Activated CD8-positive, alpha-beta memory T cell treated with anti-CD3 and anti-CD28 coated beads, Interleukin-2, amount 10 ng/mL, durations not matched to agents 7 days and 5 days (primary cell): ENCODE measurements at regions of chr17 and their contacts with region 1.

Region 1: DNA sequence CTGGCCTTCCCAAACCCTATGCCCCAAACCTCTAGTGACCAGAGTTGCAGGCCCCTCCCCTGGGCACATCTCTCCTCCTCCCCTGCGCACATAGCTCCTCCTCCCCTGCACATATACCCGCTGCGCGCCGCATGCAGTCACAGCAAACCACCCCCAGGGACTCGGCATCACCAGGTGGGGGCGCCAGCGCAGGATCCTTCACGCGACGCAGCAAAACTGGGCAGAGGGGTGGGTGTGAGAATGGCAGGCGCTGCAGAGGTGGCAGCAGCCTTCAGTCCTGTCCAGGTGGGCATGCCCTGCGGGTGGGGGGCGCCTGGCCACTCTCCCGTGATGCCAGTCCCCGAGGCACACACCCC is 5.6 kb downstream of the CORO6 start:
- DNase-seq: peak; percentile 96
- ATAC-seq: peak; percentile 71
- H3K4me3 Mint-ChIP-seq: peak overlapping the region; percentile 80
- H3K27ac Mint-ChIP-seq: peak overlapping the region; percentile 95
- H3K4me1 Mint-ChIP-seq: peaks cover 48% of the 10 kb centered on the region
- H3K27me3 Mint-ChIP-seq: peaks cover 17% of the 10 kb centered on the region

Region 2: GRCh38 chr17:29469276-29469675 is 147.8 kb before region 1 on chr17:
- CTCF ChIA-PET with region 1: no interaction called
- DNase-seq: no peak
- ATAC-seq: no peak
- H3K4me3 Mint-ChIP-seq: no peak overlapping the region
- H3K27ac Mint-ChIP-seq: no peak overlapping the region
- H3K4me1 Mint-ChIP-seq: no peaks in the 10 kb centered on the region
- H3K27me3 Mint-ChIP-seq: no peaks in the 10 kb centered on the region

Region 3: DNA sequence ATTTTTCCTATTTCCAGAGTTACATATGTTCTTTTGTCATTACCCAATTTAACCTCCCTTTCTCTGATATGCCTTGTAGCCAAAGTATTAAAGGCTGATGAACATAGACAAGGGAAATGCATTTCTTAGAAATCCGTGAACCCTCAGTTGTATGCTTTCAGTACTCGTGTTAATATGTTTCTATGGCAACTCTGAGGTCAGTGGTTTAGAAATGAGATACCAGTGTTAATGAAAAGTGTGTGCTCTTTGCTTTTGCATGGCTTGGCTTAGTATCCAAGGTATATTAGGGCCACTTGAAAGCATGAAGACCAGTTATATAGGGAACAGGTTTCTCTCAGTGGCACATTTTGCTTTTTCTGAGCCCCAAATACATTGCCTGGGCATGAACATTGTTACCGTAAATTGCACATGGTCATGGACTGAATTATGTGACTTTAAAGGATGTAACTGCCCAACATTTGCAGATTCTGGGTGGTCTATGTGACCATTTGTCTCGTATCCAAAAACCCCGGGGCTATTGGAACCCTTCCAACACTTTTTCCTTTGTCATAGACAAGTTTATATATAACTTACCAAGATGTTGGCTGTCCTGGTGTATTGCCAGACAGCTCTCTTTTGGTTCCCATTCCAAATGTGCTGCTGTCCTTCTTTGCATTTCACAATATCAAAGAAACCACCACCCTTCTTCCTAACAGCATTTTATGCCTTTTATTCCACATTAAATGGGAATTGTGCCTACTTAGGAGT is 67.8 kb before region 1 on chr17:
- CTCF ChIA-PET with region 1: no interaction called
- DNase-seq: no peak
- ATAC-seq: peak; percentile 91
- H3K4me3 Mint-ChIP-seq: no peak overlapping the region
- H3K27ac Mint-ChIP-seq: peak overlapping the region; percentile 36
- H3K4me1 Mint-ChIP-seq: peaks cover 29% of the 10 kb centered on the region
- H3K27me3 Mint-ChIP-seq: no peaks in the 10 kb centered on the region

Region 4: DNA sequence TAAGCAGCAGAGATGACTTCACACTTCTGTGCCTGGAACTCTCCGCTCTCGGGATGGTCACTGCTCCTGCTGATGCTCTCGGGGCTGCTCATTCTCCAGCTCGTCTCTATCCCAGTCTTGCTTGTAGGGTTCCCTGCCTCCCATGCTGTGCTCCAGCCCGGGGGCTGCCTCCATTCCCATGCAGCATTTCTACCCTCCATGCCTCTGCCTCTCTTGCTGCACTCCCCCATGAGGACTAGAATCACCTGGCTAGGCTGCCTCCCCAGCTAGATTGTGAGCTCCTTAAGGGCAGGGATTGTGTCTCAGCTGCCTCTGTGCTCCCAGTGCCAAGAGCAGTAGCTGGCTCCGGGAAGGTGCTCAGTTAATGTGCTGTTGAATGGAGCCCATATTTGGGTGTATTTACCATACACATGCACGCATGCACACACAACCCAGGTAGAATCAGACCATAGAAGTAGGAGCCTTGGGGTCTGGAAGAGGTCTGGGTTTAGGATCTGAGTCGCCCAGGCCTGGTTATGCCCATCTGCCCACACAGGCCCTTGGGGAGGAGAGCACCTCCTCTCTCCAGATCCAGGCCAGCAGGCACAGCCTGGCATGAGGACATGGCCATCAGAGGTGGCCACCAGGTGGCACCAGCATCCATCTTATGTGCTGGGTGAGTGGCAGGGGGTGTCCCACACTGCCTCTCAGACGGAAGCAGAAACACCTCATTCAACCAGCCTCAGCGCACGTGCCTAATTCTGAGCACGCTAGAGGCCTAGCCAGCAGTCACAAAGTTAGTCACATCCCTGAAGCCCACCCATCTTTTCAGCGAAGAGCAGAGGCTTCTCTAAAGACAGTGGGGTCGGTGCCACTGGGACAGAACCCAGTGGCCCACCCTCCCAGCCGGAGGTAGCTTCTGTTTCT is 37.0 kb before region 1 on chr17:
- CTCF ChIA-PET with region 1: interaction called, 458 read pairs
- DNase-seq: peak; percentile 94
- ATAC-seq: peak; percentile 97
- H3K4me3 Mint-ChIP-seq: no peak overlapping the region
- H3K27ac Mint-ChIP-seq: peak overlapping the region; percentile 55
- H3K4me1 Mint-ChIP-seq: peaks cover 25% of the 10 kb centered on the region
- H3K27me3 Mint-ChIP-seq: no peaks in the 10 kb centered on the region

Region 5: GRCh38 chr17:29597361-29598172 is 19.5 kb before region 1 on chr17:
- CTCF ChIA-PET with region 1: interaction called, 137 read pairs
- DNase-seq: no peak
- ATAC-seq: no peak
- H3K4me3 Mint-ChIP-seq: no peak overlapping the region
- H3K27ac Mint-ChIP-seq: no peak overlapping the region
- H3K4me1 Mint-ChIP-seq: peaks cover 26% of the 10 kb centered on the region
- H3K27me3 Mint-ChIP-seq: no peaks in the 10 kb centered on the region

Region 6: DNA sequence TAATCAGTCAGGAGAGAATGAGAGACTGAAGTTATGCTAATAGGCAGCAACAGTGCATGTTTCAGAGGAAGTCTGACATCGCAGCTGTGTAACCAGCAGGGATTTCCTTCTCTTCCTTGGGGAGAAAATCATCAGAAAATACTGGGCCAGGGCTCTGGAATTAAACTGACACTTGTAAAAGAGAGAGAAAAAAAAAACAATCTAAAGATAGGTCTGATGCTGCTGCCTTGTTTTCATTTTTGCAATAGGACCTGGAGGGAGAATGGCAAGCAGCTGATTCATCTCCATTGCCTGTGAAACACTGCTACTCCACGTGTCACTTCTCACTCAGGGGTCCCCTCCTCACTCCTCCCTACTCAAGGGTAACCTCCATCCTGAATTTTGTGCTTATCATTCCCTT is 23.3 kb after region 1 on chr17:
- CTCF ChIA-PET with region 1: interaction called, 40 read pairs
- DNase-seq: no peak
- ATAC-seq: no peak
- H3K4me3 Mint-ChIP-seq: no peak overlapping the region
- H3K27ac Mint-ChIP-seq: peak overlapping the region; percentile 42
- H3K4me1 Mint-ChIP-seq: peaks cover 21% of the 10 kb centered on the region
- H3K27me3 Mint-ChIP-seq: no peaks in the 10 kb centered on the region

Region 7: DNA sequence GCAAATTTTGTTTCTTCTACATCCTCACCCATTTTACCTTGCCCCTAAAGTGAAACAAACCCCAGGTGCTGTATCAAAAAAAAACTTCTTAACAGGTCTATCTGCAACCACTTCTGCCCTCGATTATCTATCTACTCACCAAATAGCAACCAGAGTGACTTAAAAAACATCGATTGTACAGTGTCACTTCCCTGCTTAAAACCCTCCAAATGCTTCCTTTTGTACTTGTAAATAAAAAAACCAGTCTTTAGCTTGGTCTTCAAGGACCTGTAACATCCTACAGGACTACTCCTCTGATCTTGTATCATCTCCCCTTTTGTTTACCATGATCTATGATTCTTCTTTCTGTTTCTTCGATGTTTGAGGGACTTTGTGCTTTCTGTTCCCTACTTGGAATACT is 88.3 kb after region 1 on chr17:
- CTCF ChIA-PET with region 1: interaction called, 21 read pairs
- DNase-seq: no peak
- ATAC-seq: no peak
- H3K4me3 Mint-ChIP-seq: peak overlapping the region; percentile 61
- H3K27ac Mint-ChIP-seq: peak overlapping the region; percentile 91
- H3K4me1 Mint-ChIP-seq: peaks cover 33% of the 10 kb centered on the region
- H3K27me3 Mint-ChIP-seq: no peaks in the 10 kb centered on the region

Region 8: DNA sequence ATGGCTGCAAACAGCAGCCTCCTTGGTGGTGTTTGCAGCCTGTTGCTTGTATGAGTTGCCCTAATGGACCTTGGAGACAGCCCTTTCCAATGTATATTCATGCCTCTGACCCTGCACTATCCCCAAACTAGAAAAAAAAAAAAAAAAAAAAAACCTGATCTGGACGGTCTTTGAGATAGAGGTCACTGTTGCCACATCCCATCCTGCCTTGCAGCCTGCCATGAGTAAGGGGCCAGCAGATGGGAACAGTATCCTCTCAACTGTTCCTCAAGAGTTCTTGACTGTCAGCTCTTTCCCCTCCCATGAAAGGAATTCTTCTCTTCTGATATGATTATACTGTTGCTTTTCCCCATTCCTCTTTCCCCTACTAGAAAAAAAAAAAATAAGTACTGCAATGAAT is 160.6 kb after region 1 on chr17:
- CTCF ChIA-PET with region 1: interaction called, 90 read pairs
- DNase-seq: no peak
- ATAC-seq: no peak
- H3K4me3 Mint-ChIP-seq: no peak overlapping the region
- H3K27ac Mint-ChIP-seq: no peak overlapping the region
- H3K4me1 Mint-ChIP-seq: peaks cover 9% of the 10 kb centered on the region
- H3K27me3 Mint-ChIP-seq: no peaks in the 10 kb centered on the region